PC-9 (cell line): ENCODE measurements at regions of chrX and their contacts with region 1.

Region 1: DNA sequence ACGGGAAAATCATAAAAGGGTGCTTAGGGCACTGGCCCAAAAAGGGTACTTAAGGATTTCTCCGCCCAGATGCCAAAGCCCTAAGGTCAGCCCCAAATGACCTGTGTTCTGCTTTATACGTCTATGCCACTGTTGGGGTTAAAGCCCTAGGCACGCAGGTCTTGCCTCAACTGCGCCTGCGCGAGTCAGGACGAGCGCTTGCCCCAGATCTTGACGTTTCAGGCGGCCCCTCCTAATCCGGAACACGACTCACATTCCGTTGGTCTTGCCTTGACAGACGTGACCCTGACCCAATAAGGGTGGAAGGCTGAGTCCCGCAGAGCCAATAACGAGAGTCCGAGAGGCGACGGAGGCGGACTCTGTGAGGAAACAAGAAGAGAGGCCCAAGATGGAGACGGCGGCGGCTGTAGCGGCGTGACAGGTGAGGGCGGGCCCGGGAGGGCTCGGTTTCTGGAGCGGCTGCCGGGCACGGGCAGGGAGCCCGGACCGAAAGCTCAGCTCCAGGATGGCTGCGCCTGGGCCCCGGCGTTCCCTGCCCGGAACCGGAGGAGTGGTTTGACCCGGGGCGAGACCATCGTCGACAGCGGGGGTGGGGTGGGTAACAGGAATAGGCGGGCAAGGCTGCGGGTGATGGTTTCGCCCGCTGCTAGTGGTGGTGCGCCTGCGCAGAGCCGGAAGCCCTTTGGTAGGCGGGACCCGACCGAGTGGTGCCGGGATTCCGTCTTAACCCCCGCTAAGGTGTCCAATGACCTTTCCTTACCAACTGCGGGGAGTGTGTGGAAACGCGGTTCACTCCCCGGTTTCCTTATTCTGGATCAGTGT is at the start of gene ARAF:
- DNase-seq: peak; percentile 89 to 92
- H3K4me3 ChIP-seq: peak within 1 kb of the TSS; percentile 66
- H3K27ac ChIP-seq: peak within 1 kb of the TSS; percentile 57; the same call in 1 of the 2 replicates
- H3K4me1 ChIP-seq: no peaks in the 10 kb centered on the region; the same call in 1 of the 2 replicates
- H3K27me3 ChIP-seq: no peaks in the 10 kb centered on the region
- CTCF ChIP-seq: no peak
- total RNA-seq, gene ARAF: 27.3 and 31.1 TPM in 2 replicates

Region 2: DNA sequence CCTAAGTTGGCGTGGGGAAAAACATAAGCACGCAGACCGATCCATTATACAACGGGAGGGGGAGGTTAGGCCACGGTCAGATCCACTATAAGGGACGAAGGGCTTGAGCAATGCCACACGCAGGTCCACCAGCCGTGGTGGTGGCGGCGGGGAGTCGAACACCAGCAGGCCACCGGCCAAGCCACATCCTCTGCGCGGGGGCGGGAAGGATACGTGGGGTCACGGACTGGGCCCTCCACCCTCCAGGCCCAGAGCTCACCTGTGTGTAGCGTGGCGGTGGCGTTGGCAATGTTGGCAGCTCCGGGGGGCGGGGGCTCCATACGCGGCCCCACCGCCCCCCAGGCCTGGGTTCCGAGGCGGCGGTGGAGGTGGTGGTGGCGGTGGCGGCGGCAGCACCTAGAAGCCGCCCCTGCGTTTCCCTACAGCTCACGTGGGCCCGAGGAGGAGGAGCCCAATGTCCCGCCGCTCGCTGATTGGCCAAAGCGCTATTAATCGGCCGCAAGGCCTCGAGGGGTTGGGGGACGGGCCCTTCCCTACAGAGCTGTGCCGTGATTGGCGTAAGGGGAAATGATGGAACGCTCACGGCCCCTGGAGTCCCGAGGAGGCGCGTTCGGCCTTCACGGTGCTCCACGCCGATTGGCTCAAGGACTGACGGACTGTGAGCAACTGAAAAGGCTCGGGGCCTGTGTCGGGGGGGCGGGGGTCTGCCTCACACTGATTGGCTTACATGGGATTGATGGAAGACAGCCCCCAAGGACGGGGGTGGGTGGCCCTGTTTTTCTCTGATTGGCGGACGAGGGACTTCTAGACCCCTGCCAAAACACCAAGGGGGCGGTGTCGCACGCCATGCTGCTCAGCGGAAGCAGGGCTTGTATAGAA is 89.4 kb after region 1 on chrX and contains the start of gene ELK1:
- CTCF ChIA-PET with region 1: no interaction called
- POLR2A ChIA-PET with region 1: no interaction called
- intact Hi-C with region 1: loop called (anchors 2 kb)
- DNase-seq: peak; percentile 85 to 89
- H3K4me3 ChIP-seq: peak within 1 kb of the TSS; percentile 51; the same call in 1 of the 2 replicates
- H3K27ac ChIP-seq: no peak within 1 kb of the TSS
- H3K4me1 ChIP-seq: no peaks in the 10 kb centered on the region
- H3K27me3 ChIP-seq: no peaks in the 10 kb centered on the region
- CTCF ChIP-seq: no peak
- total RNA-seq, gene ELK1: 16.4 and 22.0 TPM in 2 replicates

Region 3: GRCh38 chrX:47658684-47659515 is 97.9 kb after region 1 on chrX and contains the start of gene UXT:
- CTCF ChIA-PET with region 1: no interaction called
- POLR2A ChIA-PET with region 1: no interaction called
- intact Hi-C with region 1: loop called (anchors 2 kb)
- DNase-seq: peak; percentile 74 to 84
- H3K4me3 ChIP-seq: peak within 1 kb of the TSS; percentile 62
- H3K27ac ChIP-seq: peak within 1 kb of the TSS; percentile 93
- H3K4me1 ChIP-seq: no peaks in the 10 kb centered on the region
- H3K27me3 ChIP-seq: no peaks in the 10 kb centered on the region
- CTCF ChIP-seq: no peak
- total RNA-seq, gene UXT: 46.0 and 53.8 TPM in 2 replicates

Region 4: GRCh38 chrX:47991263-47992092 is 430.4 kb after region 1 on chrX:
- CTCF ChIA-PET with region 1: no interaction called
- POLR2A ChIA-PET with region 1: no interaction called
- intact Hi-C with region 1: no loop called
- DNase-seq: no peak
- H3K4me3 ChIP-seq: no peak overlapping the region
- H3K27ac ChIP-seq: no peak overlapping the region
- H3K4me1 ChIP-seq: no peaks in the 10 kb centered on the region
- H3K27me3 ChIP-seq: no peaks in the 10 kb centered on the region
- CTCF ChIP-seq: no peak